Activated CD8-positive, alpha-beta T cell treated with anti-CD3 and anti-CD28 coated beads, Interleukin-2, amount 10 ng/mL, durations not matched to agents 7 days and 5 days (primary cell): ENCODE measurements at regions of chr10 and their contacts with region 1.

Region 1: DNA sequence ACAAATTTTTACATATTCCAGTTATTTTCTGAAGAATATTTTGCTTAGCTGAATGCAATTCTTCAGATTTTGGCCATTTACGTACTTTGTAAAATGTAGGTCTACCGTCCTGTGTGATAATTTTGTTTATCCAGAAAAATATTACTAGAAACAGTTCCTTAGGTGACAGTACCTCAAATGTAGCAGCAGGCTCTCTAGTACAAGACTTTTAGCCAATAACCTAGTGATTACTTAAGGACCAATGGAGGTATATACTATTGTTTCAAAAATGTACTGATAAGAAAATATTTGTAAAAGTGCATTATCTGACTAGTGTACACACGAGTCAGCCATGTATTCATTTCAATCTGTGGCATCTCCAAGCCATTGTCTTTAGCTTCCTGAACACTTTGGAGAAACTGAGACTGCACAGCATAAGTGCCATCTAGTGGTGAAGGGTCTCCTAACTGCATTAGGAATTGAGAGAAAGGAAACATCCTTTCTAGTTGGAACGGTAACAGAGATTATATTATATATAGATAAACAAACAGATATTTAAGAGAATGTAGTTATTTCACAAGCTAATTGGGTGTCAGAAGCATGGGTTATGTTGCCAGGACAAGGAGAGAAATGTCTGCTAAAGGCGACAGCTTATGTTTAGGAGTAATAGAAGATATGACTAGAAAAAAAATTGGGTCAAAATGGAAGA is 23.7 kb downstream of the RTKN2 start:
- DNase-seq: peak; percentile 77
- ATAC-seq: peak; percentile 85
- H3K4me3 Mint-ChIP-seq: no peak overlapping the region
- H3K27ac Mint-ChIP-seq: peak overlapping the region; percentile 58
- H3K4me1 Mint-ChIP-seq: peaks cover 36% of the 10 kb centered on the region
- H3K27me3 Mint-ChIP-seq: no peaks in the 10 kb centered on the region

Region 2: GRCh38 chr10:61903221-61903927 is 341.6 kb before region 1 on chr10:
- CTCF ChIA-PET with region 1: interaction called, 29 read pairs
- POLR2A ChIA-PET with region 1: interaction called, 13 read pairs
- DNase-seq: peak; percentile 79
- ATAC-seq: peak; percentile 67
- H3K4me3 Mint-ChIP-seq: peak overlapping the region; percentile 94
- H3K27ac Mint-ChIP-seq: peak overlapping the region; percentile 97
- H3K4me1 Mint-ChIP-seq: peaks cover 36% of the 10 kb centered on the region
- H3K27me3 Mint-ChIP-seq: no peaks in the 10 kb centered on the region

Region 3: GRCh38 chr10:62038609-62039190 is 206.2 kb before region 1 on chr10:
- CTCF ChIA-PET with region 1: interaction called, 253 read pairs
- POLR2A ChIA-PET with region 1: interaction called, 5 read pairs
- DNase-seq: peak; percentile 88
- ATAC-seq: peak; percentile 78
- H3K4me3 Mint-ChIP-seq: peak overlapping the region; percentile 11
- H3K27ac Mint-ChIP-seq: peak overlapping the region; percentile 71
- H3K4me1 Mint-ChIP-seq: peaks cover 62% of the 10 kb centered on the region
- H3K27me3 Mint-ChIP-seq: no peaks in the 10 kb centered on the region

Region 4: GRCh38 chr10:62082729-62083411 is 162.1 kb before region 1 on chr10:
- CTCF ChIA-PET with region 1: interaction called, 16 read pairs
- POLR2A ChIA-PET with region 1: interaction called, 5 read pairs
- DNase-seq: peak; percentile 74
- ATAC-seq: peak; percentile 78
- H3K4me3 Mint-ChIP-seq: peak overlapping the region; percentile 66
- H3K27ac Mint-ChIP-seq: peak overlapping the region; percentile 92
- H3K4me1 Mint-ChIP-seq: peaks cover 68% of the 10 kb centered on the region
- H3K27me3 Mint-ChIP-seq: no peaks in the 10 kb centered on the region

Region 5: GRCh38 chr10:62109587-62110293 is 135.2 kb before region 1 on chr10:
- CTCF ChIA-PET with region 1: interaction called, 10 read pairs
- POLR2A ChIA-PET with region 1: interaction called, 3 read pairs
- DNase-seq: no peak
- ATAC-seq: no peak
- H3K4me3 Mint-ChIP-seq: no peak overlapping the region
- H3K27ac Mint-ChIP-seq: peak overlapping the region; percentile 80
- H3K4me1 Mint-ChIP-seq: peaks cover 44% of the 10 kb centered on the region
- H3K27me3 Mint-ChIP-seq: no peaks in the 10 kb centered on the region

Region 6: DNA sequence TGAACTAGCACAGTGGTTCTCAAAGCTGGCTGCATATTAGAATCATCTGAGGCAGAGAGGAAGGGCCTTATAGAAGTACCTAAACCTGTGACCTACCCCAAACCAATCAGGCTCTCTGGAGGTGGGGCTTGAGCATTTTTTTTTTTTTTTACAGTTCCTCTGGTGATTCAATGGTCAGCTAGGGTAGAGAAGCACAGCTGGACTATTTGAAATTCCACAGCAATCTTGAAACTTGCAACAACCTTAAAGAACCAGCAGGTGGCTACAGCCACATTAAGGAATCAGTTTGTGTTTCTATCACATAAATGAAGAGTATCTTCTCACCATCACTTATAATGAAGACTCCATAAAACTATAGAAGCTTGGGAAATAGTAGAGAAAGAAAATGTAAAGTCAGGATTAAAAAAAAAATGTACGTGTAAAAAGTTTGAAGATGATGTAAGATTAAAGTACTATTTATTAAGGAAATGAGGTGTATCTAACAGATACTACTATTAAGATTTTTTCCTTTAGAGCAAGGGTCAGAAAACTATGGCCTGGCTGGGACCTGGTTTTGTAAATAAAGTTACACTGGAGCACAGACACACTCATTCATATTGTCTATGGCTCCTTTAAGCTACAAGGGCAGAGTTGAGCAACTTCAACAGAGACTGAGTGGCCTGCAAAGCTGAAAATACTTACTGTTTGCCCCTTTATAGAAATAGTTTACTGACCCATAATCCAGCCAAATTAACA is 19.9 kb after region 1 on chr10:
- CTCF ChIA-PET with region 1: interaction called, 22 read pairs
- POLR2A ChIA-PET with region 1: no interaction called
- DNase-seq: no peak
- ATAC-seq: no peak
- H3K4me3 Mint-ChIP-seq: no peak overlapping the region
- H3K27ac Mint-ChIP-seq: no peak overlapping the region
- H3K4me1 Mint-ChIP-seq: peaks cover 17% of the 10 kb centered on the region
- H3K27me3 Mint-ChIP-seq: peaks cover 26% of the 10 kb centered on the region